MCF 10A (cell line): ENCODE measurements at regions of chr3 and their contacts with region 1.

Region 1: GRCh38 chr3:108589146-108589997 is at the starts of genes CIP2A and DZIP3:
- DNase-seq: peak; percentile 93
- H3K4me3 Mint-ChIP-seq: peak within 1 kb of the TSS; percentile 98
- H3K27ac Mint-ChIP-seq: peak within 1 kb of the TSS; percentile 100
- H3K4me1 Mint-ChIP-seq: peaks cover 46% of the 10 kb centered on the region
- H3K27me3 Mint-ChIP-seq: no peaks in the 10 kb centered on the region
- CTCF ChIP-seq: no peak
- total RNA-seq, gene CIP2A: 15.5 and 23.9 TPM in 2 replicates
- total RNA-seq, gene DZIP3: 10.1 and 10.3 TPM in 2 replicates

Region 2: GRCh38 chr3:108578064-108578463 is 11.3 kb before region 1 on chr3:
- CTCF ChIA-PET with region 1: interaction called, 6 read pairs
- POLR2A ChIA-PET with region 1: interaction called, 17 read pairs
- intact Hi-C with region 1: no loop called
- DNase-seq: no peak
- H3K4me3 Mint-ChIP-seq: no peak overlapping the region
- H3K27ac Mint-ChIP-seq: no peak overlapping the region
- H3K4me1 Mint-ChIP-seq: peaks cover 7% of the 10 kb centered on the region
- H3K27me3 Mint-ChIP-seq: no peaks in the 10 kb centered on the region
- CTCF ChIP-seq: no peak

Region 3: GRCh38 chr3:108602249-108602934 is 13.0 kb after region 1 on chr3:
- CTCF ChIA-PET with region 1: interaction called, 3 read pairs
- POLR2A ChIA-PET with region 1: interaction called, 20 read pairs
- intact Hi-C with region 1: no loop called
- DNase-seq: no peak
- H3K4me3 Mint-ChIP-seq: no peak overlapping the region
- H3K27ac Mint-ChIP-seq: no peak overlapping the region
- H3K4me1 Mint-ChIP-seq: no peaks in the 10 kb centered on the region
- H3K27me3 Mint-ChIP-seq: no peaks in the 10 kb centered on the region
- CTCF ChIP-seq: no peak

Region 4: DNA sequence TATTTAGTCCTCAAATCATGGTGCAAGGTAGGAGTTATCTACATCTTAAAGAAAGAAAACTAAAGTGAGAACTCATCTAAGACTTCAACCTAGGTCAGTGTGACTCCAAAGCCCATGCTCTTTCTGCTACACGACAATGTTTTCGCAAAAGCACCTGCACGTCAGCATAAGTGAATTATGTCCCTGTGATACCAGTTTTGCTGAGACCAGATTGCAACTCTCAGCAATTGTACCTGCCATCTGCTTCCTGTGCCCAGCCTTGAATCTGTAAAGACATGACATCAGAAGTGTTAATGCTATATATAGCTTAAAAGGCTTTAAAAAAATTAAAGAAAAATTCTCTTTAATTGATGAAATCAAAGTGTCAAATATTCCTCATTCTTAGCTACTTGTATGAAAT is 124.4 kb after region 1 on chr3:
- CTCF ChIA-PET with region 1: no interaction called
- POLR2A ChIA-PET with region 1: no interaction called
- intact Hi-C with region 1: no loop called
- DNase-seq: no peak
- H3K4me3 Mint-ChIP-seq: no peak overlapping the region
- H3K27ac Mint-ChIP-seq: no peak overlapping the region
- H3K4me1 Mint-ChIP-seq: no peaks in the 10 kb centered on the region
- H3K27me3 Mint-ChIP-seq: no peaks in the 10 kb centered on the region
- CTCF ChIP-seq: no peak